ENCODE measurements at regions of chr22 and their contacts with region 1.

Region 1: DNA sequence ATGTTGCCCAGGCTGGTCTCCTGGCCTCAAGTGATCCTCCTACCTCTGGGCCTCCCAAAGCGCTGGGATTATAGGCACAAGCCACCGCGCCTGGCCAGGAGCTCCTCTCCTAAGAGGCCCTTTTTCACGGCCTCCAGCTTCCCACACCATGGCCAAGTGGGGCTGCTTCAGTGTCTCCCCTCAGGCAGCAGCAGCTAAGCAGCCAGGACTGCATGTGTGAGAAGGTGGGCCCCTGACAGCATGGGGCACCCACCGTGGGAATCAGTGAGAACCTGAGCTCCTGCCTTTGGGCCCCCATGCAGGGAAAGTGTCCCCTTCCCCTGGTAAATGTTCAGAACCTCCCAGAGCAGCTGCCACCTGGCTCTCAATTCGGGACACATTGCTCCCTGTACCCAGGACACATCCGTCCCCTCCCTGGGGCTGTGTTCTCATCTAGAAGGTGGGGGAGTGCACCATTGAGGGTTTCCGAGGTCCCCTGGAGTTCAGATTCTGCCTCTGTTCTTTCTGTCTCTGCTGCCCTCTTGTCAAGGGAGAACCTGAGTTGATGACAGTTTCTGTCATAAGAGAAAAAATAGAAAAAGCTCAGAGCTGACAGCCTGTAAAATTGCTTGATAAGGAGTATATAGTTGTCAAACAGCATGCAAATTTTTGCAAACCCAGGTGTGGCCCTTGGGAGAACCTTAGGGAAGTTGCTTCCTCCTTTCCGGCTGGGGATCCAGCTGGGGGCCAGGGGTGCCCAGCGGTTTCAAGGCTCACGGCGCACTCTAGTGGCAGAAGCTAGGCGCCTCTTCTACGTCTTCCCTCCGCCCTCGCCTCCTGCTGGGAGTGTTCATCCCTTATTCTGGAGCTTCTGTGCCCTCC is 29.7 kb downstream of the FAM83F start:
- DNase-seq: peak; percentile 86

Region 2: GRCh38 chr22:39622881-39623367 is 401.5 kb before region 1 on chr22:
- intact Hi-C with region 1: loop called (anchors 2 kb)
- DNase-seq: no peak

Region 3: GRCh38 chr22:39954584-39955055 is 69.8 kb before region 1 on chr22:
- intact Hi-C with region 1: no loop called
- DNase-seq: no peak

Measured in cardiac septum (tissue), 1 donor.